SK-N-SH (cell line): ENCODE measurements at regions of chr19 and their contacts with region 1.

Region 1: GRCh38 chr19:2236314-2237050 is at the starts of genes PLEKHJ1 and SF3A2:
- DNase-seq: peak; percentile 99
- H3K4me3 ChIP-seq: peak within 1 kb of the TSS; percentile 76 to 89
- H3K27ac ChIP-seq: peak within 1 kb of the TSS; percentile 93 to 96
- H3K4me1 ChIP-seq: peaks cover 21 to 46% of the 10 kb centered on the region in 2 experiments; a peak in 3 of 4 replicates
- H3K27me3 ChIP-seq: no peaks in the 10 kb centered on the region
- CTCF ChIP-seq: peak; percentile 97
- EP300 ChIP-seq: no peak
- RAD21 ChIP-seq: peak; percentile 96
- polyA plus RNA-seq, gene PLEKHJ1: 128 and 151 TPM in 2 replicates
- polyA plus RNA-seq, gene SF3A2: 35.0 and 55.8 TPM in 2 replicates

Region 2: GRCh38 chr19:344625-345319 is 1891.7 kb before region 1 on chr19 and contains the start of gene MIER2:
- CTCF ChIA-PET with region 1: no interaction called
- POLR2A ChIA-PET with region 1: no interaction called
- DNase-seq: peak; percentile 99
- H3K4me3 ChIP-seq: peak within 1 kb of the TSS; percentile 70 to 78
- H3K27ac ChIP-seq: peak within 1 kb of the TSS; percentile 32 to 45; a peak in 3 of 4 replicates
- H3K4me1 ChIP-seq: peaks cover 20 to 31% of the 10 kb centered on the region in 2 experiments
- H3K27me3 ChIP-seq: no peaks in the 10 kb centered on the region
- CTCF ChIP-seq: no peak
- EP300 ChIP-seq: no peak
- RAD21 ChIP-seq: no peak
- polyA plus RNA-seq, gene MIER2: 8.0 and 15.9 TPM in 2 replicates

Region 3: DNA sequence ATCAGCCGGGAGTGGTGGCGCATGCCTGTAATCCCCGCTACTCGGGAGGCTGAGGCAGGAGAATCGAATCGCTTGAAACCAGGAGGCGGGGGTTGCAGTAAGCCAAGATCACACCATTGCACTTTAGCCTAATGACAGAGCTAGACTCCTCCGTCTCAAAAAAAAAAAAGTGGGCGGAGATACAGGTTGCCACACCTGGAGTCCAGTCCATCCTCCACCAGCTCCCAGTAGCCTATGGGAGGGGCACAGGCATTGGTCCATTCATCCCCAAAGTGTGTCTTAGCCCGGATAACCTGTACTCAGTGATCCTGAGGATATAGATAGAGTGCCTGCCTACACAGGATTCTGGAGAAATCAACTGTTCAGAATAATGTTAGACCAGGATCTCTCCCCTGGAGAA is 76.1 kb before region 1 on chr19:
- CTCF ChIA-PET with region 1: interaction called, 13 read pairs
- POLR2A ChIA-PET with region 1: interaction called, 3 read pairs
- DNase-seq: no peak
- H3K4me3 ChIP-seq: no peak overlapping the region
- H3K27ac ChIP-seq: 0 out of 4 replicates have a peak overlapping the region, but pooled peaks of 1 of the 2 experiments have one; percentile 87
- H3K4me1 ChIP-seq: peaks cover 0 to 4% of the 10 kb centered on the region in 2 experiments; a peak in 2 of 4 replicates
- H3K27me3 ChIP-seq: no peaks in the 10 kb centered on the region
- CTCF ChIP-seq: no peak
- EP300 ChIP-seq: no peak
- RAD21 ChIP-seq: no peak

Region 4: GRCh38 chr19:2171349-2172145 is 64.9 kb before region 1 on chr19:
- CTCF ChIA-PET with region 1: no interaction called
- POLR2A ChIA-PET with region 1: no interaction called
- DNase-seq: peak; percentile 67
- H3K4me3 ChIP-seq: no peak overlapping the region
- H3K27ac ChIP-seq: peak overlapping the region in 1 of 2 experiments; percentile 23; a peak in 1 of 4 replicates
- H3K4me1 ChIP-seq: peaks cover 45% of the 10 kb centered on the region in 2 experiments
- H3K27me3 ChIP-seq: no peaks in the 10 kb centered on the region
- CTCF ChIP-seq: no peak
- EP300 ChIP-seq: no peak
- RAD21 ChIP-seq: no peak

Region 5: DNA sequence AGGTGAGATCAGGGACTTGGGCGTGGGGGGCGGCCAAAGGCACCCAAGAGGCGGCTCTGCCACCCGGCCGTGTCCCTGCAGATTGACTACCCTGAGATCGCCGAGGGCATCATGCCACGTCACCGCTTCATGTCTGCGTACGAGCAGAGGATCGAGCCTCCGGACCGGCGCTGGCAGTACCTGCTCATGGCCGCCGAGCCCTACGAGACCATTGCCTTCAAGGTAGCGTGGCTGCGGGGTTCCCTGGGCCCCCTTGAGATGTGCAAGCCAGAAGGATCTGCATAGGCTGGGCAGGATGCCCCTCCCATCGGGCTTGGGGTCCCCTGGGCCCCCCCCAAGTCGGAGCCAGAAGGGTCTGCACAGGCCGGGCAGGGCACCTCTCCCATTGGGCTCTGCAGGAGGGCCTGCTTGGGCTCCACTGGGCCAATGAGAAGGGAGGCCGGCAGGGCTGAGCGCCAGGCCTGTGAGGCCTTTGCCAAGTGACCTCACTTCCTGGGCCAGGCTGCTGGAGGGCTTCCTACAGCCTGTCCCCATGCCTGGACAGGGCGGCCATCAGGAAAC is 10.4 kb after region 1 on chr19:
- CTCF ChIA-PET with region 1: interaction called, 11 read pairs
- POLR2A ChIA-PET with region 1: interaction called, 3 read pairs
- DNase-seq: peak; percentile 49
- H3K4me3 ChIP-seq: no peak overlapping the region
- H3K27ac ChIP-seq: peak overlapping the region; percentile 45 to 47; a peak in 3 of 4 replicates
- H3K4me1 ChIP-seq: peaks cover 6 to 48% of the 10 kb centered on the region in 2 experiments; a peak in 2 of 4 replicates
- H3K27me3 ChIP-seq: no peaks in the 10 kb centered on the region
- CTCF ChIP-seq: no peak
- EP300 ChIP-seq: no peak
- RAD21 ChIP-seq: no peak

Region 6: GRCh38 chr19:2253106-2254053 is 16.9 kb after region 1 on chr19:
- CTCF ChIA-PET with region 1: interaction called, 121 read pairs
- POLR2A ChIA-PET with region 1: interaction called, 4 read pairs
- DNase-seq: peak; percentile 58
- H3K4me3 ChIP-seq: no peak overlapping the region
- H3K27ac ChIP-seq: no peak overlapping the region; a peak in 1 of 4 replicates
- H3K4me1 ChIP-seq: peaks cover 0 to 17% of the 10 kb centered on the region in 2 experiments; a peak in 1 of 4 replicates
- H3K27me3 ChIP-seq: no peaks in the 10 kb centered on the region
- CTCF ChIP-seq: peak; percentile 39
- EP300 ChIP-seq: no peak
- RAD21 ChIP-seq: no peak

Region 7: DNA sequence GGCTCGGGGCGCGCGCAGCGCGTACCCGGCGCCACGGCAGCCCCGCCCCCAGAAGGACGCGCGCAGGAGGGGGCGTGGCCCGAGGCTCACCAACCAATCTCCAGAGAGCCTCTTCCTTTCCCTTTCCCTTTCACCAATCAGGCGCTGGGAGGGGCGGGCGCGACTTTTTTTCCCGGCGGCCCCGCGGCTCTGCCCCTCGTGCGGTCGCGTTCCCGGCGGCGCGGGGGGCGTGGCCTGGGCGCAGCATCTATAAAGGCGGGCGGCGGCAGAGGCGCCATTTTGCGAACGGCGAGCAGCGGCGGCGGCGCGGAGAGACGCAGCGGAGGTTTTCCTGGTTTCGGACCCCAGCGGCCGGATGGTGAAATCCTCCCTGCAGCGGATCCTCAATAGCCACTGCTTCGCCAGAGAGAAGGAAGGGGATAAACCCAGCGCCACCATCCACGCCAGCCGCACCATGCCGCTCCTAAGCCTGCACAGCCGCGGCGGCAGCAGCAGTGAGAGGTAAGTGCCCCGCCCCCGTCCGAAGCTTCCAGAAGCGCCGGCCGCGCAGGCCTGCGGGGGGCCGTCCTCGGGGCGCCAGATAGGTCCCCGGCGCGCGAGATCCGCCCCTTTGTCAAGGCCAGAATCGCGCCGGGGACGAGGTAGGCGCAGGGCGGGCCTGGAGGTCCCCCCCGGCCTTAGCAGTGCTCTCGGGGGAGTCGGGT is 32.9 kb after region 1 on chr19:
- CTCF ChIA-PET with region 1: interaction called, 121 read pairs
- POLR2A ChIA-PET with region 1: interaction called, 8 read pairs
- DNase-seq: peak; percentile 100
- H3K4me3 ChIP-seq: peak overlapping the region; percentile 91 to 100
- H3K27ac ChIP-seq: peak overlapping the region; percentile 87
- H3K4me1 ChIP-seq: peaks cover 8 to 32% of the 10 kb centered on the region in 2 experiments; a peak in 3 of 4 replicates
- H3K27me3 ChIP-seq: no peaks in the 10 kb centered on the region
- CTCF ChIP-seq: 0 out of 2 replicates have a peak, but pooled peaks have one; percentile 26
- EP300 ChIP-seq: no peak; a peak in 1 of 4 replicates
- RAD21 ChIP-seq: no peak

Region 8: DNA sequence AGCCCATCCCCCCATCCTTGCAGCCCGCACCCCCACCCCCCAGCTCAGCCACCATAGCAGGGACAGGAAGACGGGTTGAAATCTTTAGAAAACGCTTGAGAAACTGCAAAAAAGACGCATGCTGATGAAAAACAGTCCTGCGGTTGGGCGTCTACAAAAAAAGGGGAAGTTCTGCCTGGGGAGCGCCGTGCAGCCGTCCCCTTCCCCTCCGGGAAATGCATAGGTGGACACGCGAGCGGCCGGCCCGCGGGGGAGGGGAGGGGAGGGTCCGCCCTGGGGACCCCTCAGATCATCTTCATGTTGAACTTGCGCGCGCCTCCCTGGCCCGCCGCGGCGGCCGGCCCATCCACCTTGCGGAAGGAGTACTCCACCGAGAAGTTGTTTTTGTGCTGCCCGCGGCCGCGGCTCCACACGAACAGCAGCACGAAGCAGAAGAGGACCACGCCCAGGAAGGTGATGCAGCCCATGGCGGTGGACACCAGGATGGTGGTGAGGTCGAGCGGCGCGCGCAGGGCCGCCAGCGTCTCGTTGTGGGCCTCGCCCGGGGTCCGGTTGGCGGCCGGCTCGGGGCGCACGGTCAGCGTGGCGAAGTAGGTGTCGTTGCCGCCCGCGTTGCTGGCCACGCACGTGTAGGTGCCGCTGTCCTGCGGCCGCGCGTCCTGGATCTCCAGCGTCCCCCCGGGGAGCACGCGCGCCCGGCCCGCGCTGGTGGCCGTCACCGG is 53.4 kb after region 1 on chr19:
- CTCF ChIA-PET with region 1: interaction called, 11 read pairs
- POLR2A ChIA-PET with region 1: no interaction called
- DNase-seq: no peak
- H3K4me3 ChIP-seq: no peak overlapping the region
- H3K27ac ChIP-seq: no peak overlapping the region
- H3K4me1 ChIP-seq: peaks cover under 1 to 16% of the 10 kb centered on the region in 2 experiments; a peak in 1 of 4 replicates
- H3K27me3 ChIP-seq: peaks cover 37% of the 10 kb centered on the region
- CTCF ChIP-seq: no peak
- EP300 ChIP-seq: no peak
- RAD21 ChIP-seq: no peak

Region 9: GRCh38 chr19:2408247-2408646 is 171.8 kb after region 1 on chr19:
- CTCF ChIA-PET with region 1: no interaction called
- POLR2A ChIA-PET with region 1: no interaction called
- DNase-seq: no peak
- H3K4me3 ChIP-seq: no peak overlapping the region
- H3K27ac ChIP-seq: no peak overlapping the region
- H3K4me1 ChIP-seq: no peaks in the 10 kb centered on the region
- H3K27me3 ChIP-seq: peaks cover 13% of the 10 kb centered on the region; the same call in 1 of the 2 replicates
- CTCF ChIP-seq: no peak
- EP300 ChIP-seq: no peak
- RAD21 ChIP-seq: no peak